HepG2 (cell line): ENCODE measurements at regions of chr1 and their contacts with region 1.

Region 1: DNA sequence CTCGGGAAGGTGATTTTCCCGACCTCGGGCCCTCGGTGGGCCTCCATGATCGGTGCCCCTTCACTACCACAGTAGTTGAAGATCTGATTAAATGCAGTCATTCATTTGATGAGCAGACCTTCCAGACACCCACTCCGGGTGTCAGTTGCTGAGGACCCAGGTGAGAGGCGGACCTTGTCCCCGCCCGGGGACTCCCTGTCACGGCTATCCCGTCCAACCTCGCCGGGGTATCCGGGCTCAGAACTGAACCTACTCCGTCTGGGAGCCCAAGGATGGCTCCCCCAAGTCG is 22.6 kb downstream of the RNU1-3 start:
- DNase-seq: no peak
- ATAC-seq: peak; percentile 0; the same call in 2 of the 3 replicates
- H3K4me3 ChIP-seq: peak overlapping the region; percentile 85 to 96 (median 90)
- H3K27ac ChIP-seq: peak overlapping the region; percentile 96
- H3K4me1 ChIP-seq: peaks cover 53% of the 10 kb centered on the region
- H3K27me3 ChIP-seq: no peaks in the 10 kb centered on the region; a peak in 1 of 5 replicates
- CTCF ChIP-seq: no peak
- EP300 ChIP-seq: no peak
- POLR2A ChIP-seq: no peak
- RAD21 ChIP-seq: no peak

Region 2: DNA sequence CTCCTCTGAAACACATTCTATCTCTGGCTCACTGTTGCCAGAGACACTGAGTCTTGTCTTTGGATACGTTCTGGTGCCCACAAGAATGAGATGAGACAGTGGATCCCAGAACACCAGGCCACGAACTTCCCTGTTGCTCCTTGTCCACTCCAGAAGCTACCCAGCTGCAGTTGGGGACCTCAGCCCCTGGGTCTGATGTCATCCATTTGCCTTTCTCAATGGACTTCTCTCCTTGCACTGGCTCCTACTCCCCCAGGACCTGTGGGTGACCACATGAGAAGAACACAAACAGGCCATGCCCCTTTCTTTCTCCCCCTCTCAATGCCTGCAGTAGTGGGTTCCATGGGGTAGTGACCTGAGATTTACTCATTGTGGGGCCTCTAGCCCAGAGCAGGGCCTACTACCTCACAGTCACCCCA is 36.7 kb before region 1 on chr1:
- CTCF ChIA-PET with region 1: no interaction called
- POLR2A ChIA-PET with region 1: interaction called, 17 read pairs
- in situ Hi-C with region 1: no loop called
- intact Hi-C with region 1: no loop called
- DNase-seq: no peak
- ATAC-seq: no peak
- H3K4me3 ChIP-seq: no peak overlapping the region
- H3K27ac ChIP-seq: peak overlapping the region; percentile 58
- H3K4me1 ChIP-seq: peaks cover 47% of the 10 kb centered on the region
- H3K27me3 ChIP-seq: no peaks in the 10 kb centered on the region
- CTCF ChIP-seq: no peak
- EP300 ChIP-seq: no peak
- POLR2A ChIP-seq: no peak
- RAD21 ChIP-seq: no peak